PC-3 (cell line): ENCODE measurements at regions of chr14 and their contacts with region 1.

Region 1: DNA sequence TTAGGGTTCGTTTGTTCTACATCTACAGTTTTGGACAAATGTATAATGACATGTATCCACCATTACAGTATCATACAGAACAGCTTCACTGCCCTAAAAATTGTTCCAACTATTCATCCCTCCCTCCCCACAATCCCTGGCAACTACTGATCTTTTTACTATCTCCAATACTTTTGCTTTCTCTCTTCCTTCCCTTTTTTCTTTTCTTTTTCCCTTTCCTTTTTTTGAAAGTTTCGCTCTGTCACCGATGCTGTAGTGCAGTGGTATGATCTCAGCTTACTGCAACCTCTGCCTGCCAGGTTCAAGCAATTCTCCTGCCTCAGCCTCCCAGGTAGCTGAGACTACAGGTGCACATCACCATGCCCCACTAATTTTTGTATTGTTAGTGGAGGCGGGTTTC is 2.6 kb upstream of the ACOT4 start:
- DNase-seq: no peak
- ATAC-seq: no peak
- H3K4me3 ChIP-seq: no peak overlapping the region
- H3K27ac ChIP-seq: no peak overlapping the region
- H3K4me1 ChIP-seq: no peaks in the 10 kb centered on the region; the same call in 1 of the 2 replicates
- H3K27me3 ChIP-seq: no peaks in the 10 kb centered on the region
- CTCF ChIP-seq: no peak

Region 2: GRCh38 chr14:72916177-72916576 is 672.9 kb before region 1 on chr14:
- CTCF ChIA-PET with region 1: no interaction called
- POLR2A ChIA-PET with region 1: no interaction called
- intact Hi-C with region 1: loop called (anchors 10 kb)
- DNase-seq: peak; percentile 85
- ATAC-seq: peak; percentile 97
- H3K4me3 ChIP-seq: no peak overlapping the region
- H3K27ac ChIP-seq: 0 out of 2 replicates have a peak overlapping the region, but pooled peaks have one; percentile 9
- H3K4me1 ChIP-seq: peaks cover 13% of the 10 kb centered on the region
- H3K27me3 ChIP-seq: no peaks in the 10 kb centered on the region
- CTCF ChIP-seq: no peak